ENCODE measurements at regions of chr16 and their contacts with region 1.

Region 1: DNA sequence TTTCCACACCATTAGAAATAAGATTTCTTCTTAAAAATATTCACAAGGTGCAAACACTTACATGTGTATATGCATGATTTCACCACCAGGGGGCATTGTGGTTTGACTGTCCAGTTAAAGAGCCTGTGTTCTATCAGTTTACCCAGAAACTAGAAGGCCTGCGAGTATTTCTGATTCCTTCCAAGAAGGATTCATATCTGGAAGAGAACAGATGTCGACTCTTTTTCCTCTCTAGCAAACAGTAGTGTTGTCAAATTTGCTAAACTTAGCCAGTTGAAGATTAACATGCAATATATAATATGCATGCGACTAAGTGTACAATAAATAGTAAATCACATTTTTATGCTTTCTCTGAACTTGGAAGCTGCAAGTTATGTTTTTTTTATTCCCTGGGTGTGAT is 404.1 kb downstream of the WWOX start:
- DNase-seq: no peak
- ATAC-seq: no peak
- H3K4me3 ChIP-seq: no peak overlapping the region
- H3K27ac ChIP-seq: no peak overlapping the region
- H3K4me1 ChIP-seq: no peaks in the 10 kb centered on the region
- H3K27me3 ChIP-seq: no peaks in the 10 kb centered on the region

Region 2: DNA sequence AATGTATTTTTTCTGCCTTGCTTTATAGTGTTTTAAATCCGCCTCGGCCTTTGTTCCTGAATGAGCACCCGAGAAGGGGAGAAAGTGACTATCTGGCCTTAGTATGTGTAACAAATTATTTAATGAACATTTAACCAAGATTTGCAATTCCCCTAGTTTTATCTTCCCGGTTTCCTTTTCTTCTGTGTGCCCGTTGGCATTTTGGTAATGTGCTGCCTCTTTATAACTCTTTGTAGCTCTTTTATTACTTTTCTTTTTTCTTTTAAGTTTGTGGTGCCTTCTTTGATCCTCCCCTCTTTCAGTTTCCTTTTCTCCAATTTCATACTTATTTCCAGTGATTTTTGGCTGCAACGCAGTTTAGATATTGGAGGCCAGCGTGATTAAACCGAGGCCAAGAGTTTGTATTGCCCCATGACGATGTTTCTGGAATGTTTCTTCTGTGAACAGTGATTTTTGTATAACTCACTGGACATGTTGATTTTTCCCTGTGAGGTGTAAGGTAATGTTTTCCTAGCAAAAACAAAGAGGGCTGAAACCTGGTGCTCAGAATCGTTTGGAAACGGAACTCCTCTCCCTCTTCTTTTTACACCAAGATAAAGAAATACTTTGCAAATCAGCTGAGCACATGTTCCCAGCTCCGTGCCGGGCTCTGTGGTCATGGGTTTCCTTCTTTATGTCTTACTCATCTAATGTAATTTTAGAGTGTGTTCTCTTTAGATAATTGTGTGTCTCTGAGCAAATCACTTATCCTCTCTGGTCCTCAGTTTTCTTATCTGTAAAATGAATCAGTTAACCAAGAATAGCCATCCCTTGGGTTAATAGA is 59.8 kb before region 1 on chr16:
- intact Hi-C with region 1: no loop called
- DNase-seq: peak in 2 of 3 donors; percentile 30 to 52
- ATAC-seq: peak; percentile 52 to 90
- H3K4me3 ChIP-seq: peak overlapping the region; percentile 18
- H3K27ac ChIP-seq: no peak overlapping the region
- H3K4me1 ChIP-seq: no peaks in the 10 kb centered on the region
- H3K27me3 ChIP-seq: no peaks in the 10 kb centered on the region

Region 3: GRCh38 chr16:78461496-78462191 is 42.0 kb before region 1 on chr16:
- intact Hi-C with region 1: no loop called
- DNase-seq: no peak
- ATAC-seq: no peak
- H3K4me3 ChIP-seq: no peak overlapping the region
- H3K27ac ChIP-seq: no peak overlapping the region
- H3K4me1 ChIP-seq: no peaks in the 10 kb centered on the region
- H3K27me3 ChIP-seq: no peaks in the 10 kb centered on the region

Region 4: DNA sequence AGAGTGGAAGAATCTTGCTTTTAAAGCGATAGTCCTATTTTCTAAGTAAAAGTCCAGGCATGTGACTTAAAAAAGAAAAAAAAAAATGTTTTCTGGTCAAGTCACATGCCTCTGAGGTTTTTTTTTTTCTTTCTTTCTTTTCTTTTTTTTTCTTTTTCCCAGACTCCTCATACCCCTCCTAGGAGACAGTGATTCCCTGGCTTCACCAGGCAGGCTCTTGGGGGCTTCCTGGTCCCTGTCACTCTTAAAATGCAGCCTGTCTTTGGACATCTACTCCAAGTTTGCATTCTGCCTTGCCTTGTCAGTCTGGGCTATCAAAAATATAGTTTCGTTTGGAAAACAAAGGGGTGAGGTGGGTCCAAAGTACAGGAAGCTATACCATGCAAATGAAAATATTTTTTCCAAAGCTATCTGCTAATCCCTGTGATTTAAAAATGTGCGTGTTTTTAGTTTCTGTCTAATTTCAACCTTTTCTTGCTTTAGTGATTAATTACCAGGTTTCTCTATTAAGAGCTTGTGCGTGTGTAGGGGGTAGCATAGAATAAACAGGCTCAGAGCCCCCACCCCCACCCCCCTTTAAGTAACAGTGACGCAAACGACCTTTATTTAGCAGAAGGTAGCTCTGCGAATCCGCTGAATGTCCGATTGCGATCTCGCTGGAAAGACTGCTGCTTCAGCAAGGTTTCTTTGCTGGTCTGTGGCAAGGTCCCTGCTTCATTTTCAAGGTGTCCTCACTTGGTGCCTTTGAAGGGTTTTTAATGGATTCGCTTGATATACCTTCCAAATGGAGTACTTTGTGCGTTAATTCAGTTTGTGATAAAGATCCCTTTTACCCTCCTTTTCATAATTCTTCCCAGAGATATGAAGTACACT is 106.0 kb after region 1 on chr16:
- intact Hi-C with region 1: loop called in 1 of 4 experiments (anchors 10 kb)
- DNase-seq: no peak
- ATAC-seq: no peak
- H3K4me3 ChIP-seq: peak overlapping the region; percentile 16
- H3K27ac ChIP-seq: no peak overlapping the region
- H3K4me1 ChIP-seq: no peaks in the 10 kb centered on the region
- H3K27me3 ChIP-seq: no peaks in the 10 kb centered on the region

Region 5: DNA sequence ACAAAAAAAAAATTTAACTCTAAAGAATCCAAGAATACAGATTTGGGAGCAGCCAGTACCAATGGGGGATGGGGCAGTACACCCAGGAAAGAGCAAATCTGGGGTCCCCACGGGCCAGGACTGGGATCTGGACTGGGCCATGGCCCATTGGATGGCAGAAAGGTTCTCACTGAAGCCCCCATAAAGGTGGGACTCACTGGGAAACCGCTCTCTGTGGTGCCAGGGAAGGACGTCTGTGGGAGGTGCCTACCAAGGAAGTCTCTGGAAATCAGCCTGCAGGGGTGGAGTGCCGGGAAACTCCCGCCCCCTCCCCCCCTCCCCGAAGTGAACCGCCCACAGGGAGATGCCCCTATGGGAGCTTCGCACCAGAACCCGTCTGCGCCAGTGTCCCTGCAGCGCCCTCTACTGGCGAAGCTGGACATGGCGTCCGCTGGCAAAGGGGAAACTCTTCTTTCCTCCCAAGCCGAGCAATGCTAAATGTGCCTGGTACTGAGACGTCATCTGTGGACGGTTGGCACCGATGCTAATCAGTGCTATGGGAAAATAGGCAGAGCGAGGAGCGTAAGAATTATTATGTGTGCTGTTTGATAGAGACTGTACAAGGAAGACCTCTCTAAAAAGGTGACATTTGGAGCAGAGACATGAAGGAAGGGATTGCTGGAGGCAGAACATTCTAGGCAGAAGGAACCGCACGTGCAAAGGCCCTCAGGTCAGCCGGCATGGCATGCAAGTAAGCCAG is 266.9 kb after region 1 on chr16:
- intact Hi-C with region 1: loop called in 3 of 4 experiments (anchors 5 to 10 kb)
- DNase-seq: peak; percentile 75 to 92 (median 90)
- ATAC-seq: peak; percentile 69 to 92
- H3K4me3 ChIP-seq: no peak overlapping the region
- H3K27ac ChIP-seq: no peak overlapping the region
- H3K4me1 ChIP-seq: no peaks in the 10 kb centered on the region
- H3K27me3 ChIP-seq: no peaks in the 10 kb centered on the region